Naive thymus-derived CD8-positive, alpha-beta T cell (primary cell): ENCODE measurements at regions of chr3 and their contacts with region 1.

Region 1: DNA sequence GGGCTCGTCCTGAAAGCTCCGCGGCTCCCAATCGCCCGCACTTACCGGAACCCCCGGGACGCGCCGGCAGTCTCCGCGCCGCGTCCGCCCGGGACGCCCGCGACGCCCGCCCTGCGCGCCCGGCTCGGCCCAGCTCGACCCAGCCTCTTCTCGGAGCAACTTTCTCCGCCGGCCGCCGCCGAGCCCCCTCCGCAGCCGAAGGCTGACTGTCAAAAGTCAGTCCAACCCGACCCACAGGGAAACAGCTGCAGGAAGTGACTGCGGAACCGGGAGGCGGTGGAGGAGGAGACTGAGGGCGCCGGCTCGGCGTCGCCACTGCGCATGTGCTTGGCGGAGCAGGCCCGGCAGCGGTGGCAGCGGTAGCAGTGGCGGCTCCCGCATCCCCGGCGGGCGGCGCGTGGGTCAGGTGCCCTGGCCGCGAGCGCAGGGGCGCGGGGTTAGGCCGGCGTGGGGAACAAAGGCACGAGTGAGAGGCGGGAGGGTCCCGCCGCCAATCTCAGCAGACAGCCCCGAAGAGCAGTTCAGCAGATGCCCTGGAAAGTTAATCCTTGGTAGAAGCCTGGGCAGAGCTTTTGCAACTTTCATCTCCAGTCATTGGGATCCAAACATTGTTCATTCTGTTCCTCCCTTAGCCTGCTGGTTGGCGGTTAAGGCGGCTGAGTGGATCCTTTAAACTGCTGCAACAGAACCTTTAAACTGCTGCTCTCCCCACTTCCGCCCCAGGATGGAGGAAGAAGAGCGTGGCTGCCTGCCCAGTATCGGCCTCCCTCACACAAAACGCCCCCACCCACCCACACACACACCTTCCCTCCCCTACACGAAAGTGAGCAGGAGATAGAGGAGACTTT is at the start of gene ZMAT3:
- DNase-seq: peak; percentile 74 to 90 (median 80)
- ATAC-seq: peak; percentile 76 to 87
- H3K4me3 Mint-ChIP-seq: peak within 1 kb of the TSS; percentile 88 to 99 (median 98)
- H3K27ac Mint-ChIP-seq: peak within 1 kb of the TSS; percentile 92 to 97 (median 94)
- H3K4me1 Mint-ChIP-seq: peaks cover 27 to 49% (median 43%) of the 10 kb centered on the region in 4 donors
- H3K27me3 Mint-ChIP-seq: no peaks in the 10 kb centered on the region
- polyA plus RNA-seq, gene ZMAT3: 15.1 to 16.3 (median 15.7) TPM

Region 2: DNA sequence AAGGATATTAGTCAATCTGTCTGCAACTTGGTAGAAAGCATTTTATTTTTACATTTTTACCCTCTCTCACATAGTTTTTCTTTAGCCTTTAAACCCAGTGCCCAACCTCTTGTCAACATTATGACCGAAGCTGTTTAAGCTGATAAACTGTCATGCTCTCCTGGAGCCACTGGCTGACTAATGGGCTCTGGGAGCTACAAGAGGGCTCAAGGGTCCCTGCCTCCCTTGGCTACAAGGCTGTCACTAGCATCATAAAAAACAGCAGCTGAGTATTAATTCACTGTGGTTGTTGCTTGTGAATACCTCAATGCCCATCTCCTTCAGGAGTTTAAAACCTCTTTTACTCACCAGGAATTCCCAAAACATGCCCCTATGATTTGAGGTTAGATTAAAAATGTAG is 238.1 kb before region 1 on chr3:
- POLR2A ChIA-PET with region 1: no interaction called
- DNase-seq: no peak
- ATAC-seq: no peak
- H3K4me3 Mint-ChIP-seq: no peak overlapping the region
- H3K27ac Mint-ChIP-seq: no peak overlapping the region
- H3K4me1 Mint-ChIP-seq: no peaks in the 10 kb centered on the region
- H3K27me3 Mint-ChIP-seq: peaks cover 0 to 10% (median 2%) of the 10 kb centered on the region in 5 donors

Region 3: GRCh38 chr3:179037351-179037750 is 34.4 kb before region 1 on chr3:
- POLR2A ChIA-PET with region 1: interaction called, 12 read pairs
- DNase-seq: peak in 9 of 10 donors; percentile 10 to 66 (median 39)
- ATAC-seq: peak; percentile 93 to 96
- H3K4me3 Mint-ChIP-seq: peak overlapping the region; percentile 13 to 74 (median 50)
- H3K27ac Mint-ChIP-seq: peak overlapping the region in 3 of 10 donors; percentile 53 to 92 (median 87)
- H3K4me1 Mint-ChIP-seq: peaks cover 8 to 27% (median 16%) of the 10 kb centered on the region in 4 donors
- H3K27me3 Mint-ChIP-seq: no peaks in the 10 kb centered on the region

Region 4: GRCh38 chr3:179083977-179084376 is 12.2 kb after region 1 on chr3:
- POLR2A ChIA-PET with region 1: interaction called, 11 read pairs
- DNase-seq: no peak
- ATAC-seq: no peak
- H3K4me3 Mint-ChIP-seq: no peak overlapping the region
- H3K27ac Mint-ChIP-seq: peak overlapping the region in 4 of 10 donors; percentile 8 to 22 (median 14)
- H3K4me1 Mint-ChIP-seq: peaks cover 6 to 8% (median 7%) of the 10 kb centered on the region in 4 donors
- H3K27me3 Mint-ChIP-seq: no peaks in the 10 kb centered on the region